ENCODE measurements at regions of chr2 and their contacts with region 1.

Region 1: DNA sequence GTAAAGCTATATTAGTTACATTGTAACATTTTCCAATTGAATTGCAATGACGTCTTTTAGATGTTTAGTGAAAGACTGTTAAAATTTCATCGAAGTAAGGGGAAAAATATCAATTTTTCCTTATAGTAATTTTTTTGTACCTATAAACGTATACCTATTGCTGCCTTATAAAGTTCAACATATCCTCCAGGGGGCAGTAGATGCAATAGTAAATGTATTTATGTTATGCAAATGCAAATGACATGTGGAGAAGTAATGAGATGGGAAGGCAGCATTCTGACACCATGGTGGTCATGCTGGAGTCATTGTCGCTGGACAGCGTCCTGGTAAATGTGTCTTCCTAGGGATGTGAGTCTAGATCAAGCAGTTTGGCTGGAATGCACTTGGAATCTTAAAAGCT is 38.7 kb downstream of the MSTN start:
- DNase-seq: peak; percentile 3
- H3K4me3 ChIP-seq: no peak overlapping the region
- CTCF ChIP-seq: peak; percentile 47

Region 2: GRCh38 chr2:190036071-190036470 is 12.2 kb after region 1 on chr2:
- CTCF ChIA-PET with region 1: interaction called, 22 read pairs
- POLR2A ChIA-PET with region 1: no interaction called
- DNase-seq: no peak
- H3K4me3 ChIP-seq: no peak overlapping the region
- CTCF ChIP-seq: no peak

Region 3: GRCh38 chr2:190043441-190043840 is 19.6 kb after region 1 on chr2:
- CTCF ChIA-PET with region 1: interaction called, 21 read pairs
- POLR2A ChIA-PET with region 1: no interaction called
- DNase-seq: no peak
- H3K4me3 ChIP-seq: no peak overlapping the region
- CTCF ChIP-seq: no peak

Region 4: GRCh38 chr2:190277234-190278112 is 253.6 kb after region 1 on chr2:
- CTCF ChIA-PET with region 1: no interaction called
- POLR2A ChIA-PET with region 1: no interaction called
- DNase-seq: no peak
- H3K4me3 ChIP-seq: no peak overlapping the region
- CTCF ChIP-seq: peak; percentile 38